ENCODE measurements at regions of chr12 and their contacts with region 1.

Region 1: GRCh38 chr12:111304642-111305071 is 64.2 kb downstream of the PHETA1 start:
- DNase-seq: no peak
- ATAC-seq: no peak
- H3K4me3 ChIP-seq: no peak overlapping the region
- H3K27ac ChIP-seq: no peak overlapping the region
- H3K4me1 ChIP-seq: no peaks in the 10 kb centered on the region
- H3K27me3 ChIP-seq: peaks cover 6% of the 10 kb centered on the region; the same call in 1 of the 2 replicates
- CTCF ChIP-seq: peak; percentile 81

Region 2: DNA sequence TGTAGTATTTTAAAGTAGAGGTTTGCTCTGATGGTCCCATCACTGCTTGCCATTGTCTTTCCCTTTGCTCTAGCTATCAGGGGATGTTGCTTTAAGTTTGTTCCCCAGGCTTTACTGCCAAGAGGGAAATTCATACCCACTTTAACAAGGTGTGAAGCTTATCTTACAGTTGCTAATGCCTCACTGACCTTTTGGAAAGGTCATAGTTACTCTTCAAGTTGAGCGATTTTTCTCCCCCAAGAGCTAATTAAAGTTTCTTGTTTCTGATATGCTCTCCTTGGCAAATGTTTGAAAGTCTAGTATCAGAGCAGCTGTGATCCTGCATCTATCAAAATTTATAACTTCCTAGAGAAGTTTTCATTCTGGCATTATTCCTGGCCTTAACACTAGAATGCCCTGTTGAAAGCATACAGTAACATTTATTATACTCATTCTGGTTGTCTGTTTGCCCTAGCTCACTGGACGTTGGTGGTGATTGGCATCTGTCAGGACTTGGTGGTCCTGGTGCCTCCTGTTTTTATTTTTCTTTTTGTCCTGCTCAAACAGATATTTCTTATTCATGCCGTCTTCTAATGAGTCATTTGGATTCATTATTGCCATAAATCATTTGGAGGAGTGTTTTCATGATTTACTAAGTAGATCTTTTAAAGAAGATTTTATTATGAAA is 1015.5 kb before region 1 on chr12:
- CTCF ChIA-PET with region 1: no interaction called
- POLR2A ChIA-PET with region 1: no interaction called
- in situ Hi-C with region 1: no loop called
- intact Hi-C with region 1: no loop called
- DNase-seq: no peak
- ATAC-seq: 0 out of 2 replicates have a peak, but pooled peaks have one; percentile 22
- H3K4me3 ChIP-seq: no peak overlapping the region
- H3K27ac ChIP-seq: peak overlapping the region; percentile 17; the same call in 1 of the 2 replicates
- H3K4me1 ChIP-seq: peaks cover 28% of the 10 kb centered on the region
- H3K27me3 ChIP-seq: no peaks in the 10 kb centered on the region
- CTCF ChIP-seq: no peak

Region 3: DNA sequence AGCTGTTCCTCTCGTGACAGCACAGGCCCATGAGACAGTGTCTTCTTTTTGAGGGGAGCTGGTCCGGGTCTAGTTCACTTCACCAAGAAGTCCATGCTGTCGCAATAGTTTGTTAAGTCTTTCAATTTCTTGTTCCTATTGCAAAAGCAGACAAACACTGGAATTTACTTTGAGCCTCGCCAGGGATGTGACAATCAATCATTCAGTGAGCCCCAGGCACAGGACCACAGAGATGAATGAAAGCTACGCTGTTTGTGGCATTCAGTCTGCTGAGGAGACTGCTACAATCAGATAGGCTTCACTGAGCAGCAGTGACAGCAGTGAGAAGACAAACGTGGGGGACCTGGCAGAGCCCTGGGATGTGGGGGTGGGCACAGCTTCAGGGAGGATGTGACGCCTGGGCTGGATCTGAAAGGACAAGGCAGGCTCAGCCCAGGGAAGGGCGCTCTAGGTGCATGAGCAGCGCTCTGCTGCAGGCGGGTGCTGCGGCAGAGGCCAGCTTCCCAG is 655.3 kb before region 1 on chr12:
- CTCF ChIA-PET with region 1: interaction called, 14 read pairs
- POLR2A ChIA-PET with region 1: no interaction called
- in situ Hi-C with region 1: no loop called
- intact Hi-C with region 1: no loop called
- DNase-seq: no peak
- ATAC-seq: no peak
- H3K4me3 ChIP-seq: no peak overlapping the region
- H3K27ac ChIP-seq: no peak overlapping the region
- H3K4me1 ChIP-seq: no peaks in the 10 kb centered on the region
- H3K27me3 ChIP-seq: no peaks in the 10 kb centered on the region
- CTCF ChIP-seq: no peak

Region 4: DNA sequence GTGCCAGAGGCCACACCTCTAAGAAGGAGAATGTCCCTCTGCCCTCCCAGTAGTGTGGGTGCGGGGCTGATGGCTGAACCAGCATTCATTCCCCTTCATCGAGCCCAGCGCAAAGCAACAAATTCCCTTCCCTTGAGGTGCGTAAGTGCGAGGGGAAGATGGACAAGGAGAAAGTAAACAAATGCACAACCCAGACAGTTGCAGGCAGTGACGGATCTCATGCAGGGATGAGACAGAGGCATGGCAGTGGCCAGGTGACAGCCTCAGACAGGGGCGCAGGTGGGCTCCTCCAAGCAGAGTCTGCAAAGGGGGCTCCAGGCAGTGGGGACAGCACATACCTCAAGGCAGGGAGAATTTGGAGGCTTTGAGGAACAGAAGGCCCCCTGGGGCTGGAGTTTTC is 382.0 kb before region 1 on chr12:
- CTCF ChIA-PET with region 1: interaction called, 11 read pairs
- POLR2A ChIA-PET with region 1: no interaction called
- in situ Hi-C with region 1: no loop called
- intact Hi-C with region 1: no loop called
- DNase-seq: no peak
- ATAC-seq: no peak
- H3K4me3 ChIP-seq: no peak overlapping the region
- H3K27ac ChIP-seq: no peak overlapping the region
- H3K4me1 ChIP-seq: peaks cover 1% of the 10 kb centered on the region; the same call in 1 of the 2 replicates
- H3K27me3 ChIP-seq: no peaks in the 10 kb centered on the region
- CTCF ChIP-seq: no peak